HEK293T (cell line): ENCODE measurements at regions of chr3 and their contacts with region 1.

Region 1: DNA sequence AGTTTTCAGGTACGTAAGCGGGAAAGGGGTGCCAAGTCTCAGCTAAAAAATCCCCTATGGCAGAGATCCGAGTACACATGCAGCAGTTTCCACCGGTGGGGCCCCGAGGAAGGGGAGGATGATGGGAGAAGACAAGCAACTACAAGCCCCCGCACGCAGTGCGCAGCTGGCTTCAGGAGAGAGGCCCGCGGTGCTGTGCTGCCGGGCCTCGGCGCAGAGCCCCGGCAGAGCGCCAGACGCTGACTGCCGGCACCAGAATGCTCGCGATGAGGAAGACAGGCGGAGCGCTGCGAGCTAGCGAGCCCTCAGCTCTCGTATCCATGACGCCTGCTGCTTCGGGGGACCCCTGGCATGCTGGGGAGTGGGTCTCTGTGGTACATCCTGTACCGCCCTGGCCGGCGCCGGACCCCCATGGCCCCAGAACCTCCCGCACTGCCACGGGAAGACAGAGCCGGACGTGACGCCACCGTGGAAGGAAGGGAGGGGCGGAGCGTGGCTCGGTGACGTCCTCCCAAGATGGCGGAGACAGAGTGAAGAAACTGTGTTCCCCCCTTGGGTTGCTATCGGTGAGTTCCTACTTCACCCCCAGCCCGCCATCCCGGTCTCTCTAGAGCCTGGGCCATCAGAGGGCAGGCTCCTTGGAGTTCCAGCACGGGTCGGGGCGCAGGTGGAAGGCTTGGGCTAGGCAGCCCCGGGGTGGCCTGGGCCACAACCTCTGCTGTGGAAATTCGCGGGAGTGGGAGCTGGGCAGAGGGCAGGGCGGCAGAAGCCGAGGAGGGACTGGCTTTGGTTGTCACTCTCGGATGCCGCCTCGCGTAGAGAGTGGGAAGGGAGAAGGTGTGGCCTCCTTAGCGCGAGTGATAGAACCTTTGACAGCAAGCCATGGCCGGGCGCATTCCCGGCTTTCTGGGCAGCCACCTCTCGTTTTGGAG is at the start of gene MYNN:
- DNase-seq: peak; percentile 74

Region 2: GRCh38 chr3:169812332-169813235 is 39.4 kb after region 1 on chr3 and contains the starts of genes LRRC34 and LRRIQ4:
- CTCF ChIA-PET with region 1: no interaction called
- POLR2A ChIA-PET with region 1: interaction called, 12 read pairs
- DNase-seq: peak; percentile 70

Region 3: DNA sequence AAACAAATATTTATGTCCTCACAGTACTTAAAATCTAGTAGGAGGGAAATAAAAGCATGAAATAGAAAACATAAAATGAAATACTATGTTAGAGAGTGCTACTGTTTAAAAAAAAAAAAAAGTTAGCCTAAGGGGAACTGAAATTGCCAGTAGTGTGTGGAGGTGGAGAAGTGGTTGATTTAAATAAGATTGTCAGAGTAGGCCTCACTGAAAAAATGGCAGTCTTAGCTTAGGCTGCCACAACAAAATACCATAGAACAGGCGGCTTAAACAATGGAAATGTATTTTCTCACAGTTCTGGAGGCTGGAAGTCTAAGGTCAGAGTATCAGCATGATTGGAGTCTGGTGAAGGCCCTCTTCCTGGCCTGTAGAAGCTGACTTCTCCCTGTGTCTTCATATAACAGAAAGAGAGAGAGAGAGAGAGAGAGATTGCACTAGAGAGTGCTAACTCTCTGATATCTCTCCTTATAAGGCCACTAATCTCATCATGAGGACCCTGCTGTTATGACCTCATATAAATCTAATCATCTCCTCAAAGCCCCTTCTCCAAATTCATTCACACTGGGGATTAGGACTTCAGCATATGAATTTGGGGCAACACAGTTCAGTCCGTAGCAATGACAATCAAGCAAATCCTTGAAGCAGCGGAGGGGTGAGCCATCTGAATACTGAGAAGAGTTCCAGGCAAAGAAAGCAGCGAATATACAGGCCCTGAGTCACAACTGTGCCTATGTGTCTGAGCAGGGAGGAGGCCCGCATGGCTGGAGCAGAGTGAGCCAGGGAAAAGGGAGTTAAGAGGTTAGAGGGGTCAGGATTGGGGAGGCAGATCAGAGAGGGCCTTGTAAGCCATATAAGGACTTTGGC is 63.1 kb after region 1 on chr3:
- CTCF ChIA-PET with region 1: no interaction called
- POLR2A ChIA-PET with region 1: no interaction called
- DNase-seq: no peak